HCT116 (cell line): ENCODE measurements at regions of chr2 and their contacts with region 1.

Region 1: GRCh38 chr2:159712143-159712928 is at the start of gene MARCHF7:
- DNase-seq: peak; percentile 89
- ATAC-seq: peak; percentile 94
- H3K4me3 ChIP-seq: peak within 1 kb of the TSS; percentile 96 to 98
- H3K27ac ChIP-seq: peak within 1 kb of the TSS; percentile 93
- H3K4me1 ChIP-seq: peaks cover 8 to 25% of the 10 kb centered on the region in 2 experiments; a peak in 3 of 4 replicates
- H3K27me3 ChIP-seq: no peaks in the 10 kb centered on the region
- CTCF ChIP-seq: peak; percentile 48 to 63 (median 57); a peak in 5 of 6 replicates
- POLR2A ChIP-seq: peak; percentile 48
- RAD21 ChIP-seq: peak; percentile 90
- total RNA-seq, gene MARCHF7: 65.9 TPM

Region 2: DNA sequence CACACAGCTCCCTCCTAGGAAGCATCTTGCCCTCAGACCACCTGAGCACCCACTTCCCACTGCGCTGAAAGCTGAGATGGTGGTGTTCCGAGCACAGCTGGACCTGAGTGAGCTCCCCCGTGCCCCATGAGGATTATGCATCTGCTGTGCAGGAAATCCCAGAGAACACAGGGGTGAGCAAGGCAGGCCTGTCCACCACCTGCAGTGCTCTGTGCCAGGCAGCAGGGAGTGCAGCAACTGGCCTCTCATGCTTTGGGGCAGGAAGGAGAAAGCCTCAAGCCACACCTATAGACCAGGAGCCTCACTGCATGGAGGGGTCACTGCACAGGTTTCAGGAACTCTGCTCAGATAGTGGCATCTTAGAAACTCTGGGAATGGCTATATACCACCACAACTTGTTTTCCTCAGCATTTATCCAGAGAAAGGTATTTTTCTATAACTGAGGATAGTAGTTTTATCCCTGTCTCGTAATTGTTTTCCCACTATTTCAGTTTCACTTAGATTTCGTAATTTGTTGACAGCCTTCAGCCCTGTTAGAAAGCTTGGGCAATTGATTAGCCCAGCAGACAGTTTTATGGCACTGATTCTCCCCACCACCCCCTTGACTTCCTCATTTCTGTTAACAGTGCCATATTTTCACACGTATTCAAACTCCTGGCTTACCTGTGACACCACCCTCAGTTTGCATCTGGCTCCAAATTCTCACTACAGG is 1061.5 kb before region 1 on chr2:
- CTCF ChIA-PET with region 1: no interaction called
- POLR2A ChIA-PET with region 1: no interaction called
- RAD21 ChIA-PET with region 1: no interaction called
- intact Hi-C with region 1: no loop called
- DNase-seq: no peak
- ATAC-seq: peak; percentile 62
- H3K4me3 ChIP-seq: no peak overlapping the region
- H3K27ac ChIP-seq: no peak overlapping the region
- H3K4me1 ChIP-seq: no peaks in the 10 kb centered on the region
- H3K27me3 ChIP-seq: no peaks in the 10 kb centered on the region
- CTCF ChIP-seq: no peak
- POLR2A ChIP-seq: no peak
- RAD21 ChIP-seq: no peak

Region 3: DNA sequence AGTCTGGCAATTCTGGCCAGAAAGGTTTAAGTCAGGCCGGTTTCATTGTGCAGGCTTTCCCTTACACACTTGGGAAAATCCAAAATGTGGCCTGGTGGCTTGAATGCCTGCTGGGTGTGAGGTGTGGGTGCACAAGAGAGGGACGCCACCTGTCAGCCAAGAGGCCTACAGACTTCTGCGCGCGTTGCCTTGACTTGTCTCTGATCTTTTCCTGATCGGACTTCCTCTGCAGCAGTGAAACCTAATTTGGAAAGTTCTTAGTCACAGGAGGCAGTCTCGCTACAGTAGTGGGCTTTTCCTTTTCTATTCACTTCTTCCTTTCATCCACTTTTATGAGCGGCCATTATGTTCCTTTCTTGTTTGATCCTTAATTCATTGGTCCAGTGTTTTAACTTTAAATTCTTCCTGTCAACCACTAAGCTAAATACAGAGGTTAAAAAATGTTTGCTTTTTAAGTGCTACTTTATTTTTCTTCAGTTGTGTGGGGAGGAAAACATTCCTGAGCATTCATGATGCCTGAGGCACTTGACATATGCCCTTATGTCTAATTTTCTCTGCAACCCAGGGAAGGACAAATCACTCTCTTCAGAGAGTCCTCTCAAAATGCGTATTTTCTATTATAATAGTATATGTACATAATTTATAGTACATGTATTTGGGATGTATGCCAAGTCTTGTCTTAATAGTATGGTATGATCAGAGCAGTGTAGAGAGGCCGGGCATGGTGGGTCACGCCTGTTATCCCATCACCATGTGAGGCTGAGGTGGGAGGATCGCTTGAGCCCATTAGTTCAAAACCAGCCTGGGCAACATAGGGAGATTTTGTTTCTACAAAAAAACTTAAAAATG is 554.8 kb before region 1 on chr2:
- CTCF ChIA-PET with region 1: no interaction called
- POLR2A ChIA-PET with region 1: no interaction called
- RAD21 ChIA-PET with region 1: no interaction called
- intact Hi-C with region 1: loop called (anchors 10 kb)
- DNase-seq: no peak
- ATAC-seq: no peak
- H3K4me3 ChIP-seq: no peak overlapping the region
- H3K27ac ChIP-seq: no peak overlapping the region
- H3K4me1 ChIP-seq: peaks cover 31 to 39% of the 10 kb centered on the region in 2 experiments
- H3K27me3 ChIP-seq: no peaks in the 10 kb centered on the region
- CTCF ChIP-seq: no peak
- POLR2A ChIP-seq: no peak
- RAD21 ChIP-seq: no peak

Region 4: GRCh38 chr2:159286709-159287441 is 425.5 kb before region 1 on chr2:
- CTCF ChIA-PET with region 1: no interaction called
- POLR2A ChIA-PET with region 1: interaction called, 4 read pairs
- RAD21 ChIA-PET with region 1: no interaction called
- intact Hi-C with region 1: loop called (anchors 10 kb)
- DNase-seq: peak; percentile 87
- ATAC-seq: peak; percentile 95
- H3K4me3 ChIP-seq: peak overlapping the region; percentile 73 to 78
- H3K27ac ChIP-seq: peak overlapping the region; percentile 86
- H3K4me1 ChIP-seq: peaks cover 7 to 29% of the 10 kb centered on the region in 2 experiments
- H3K27me3 ChIP-seq: no peaks in the 10 kb centered on the region
- CTCF ChIP-seq: no peak
- POLR2A ChIP-seq: peak; percentile 75
- RAD21 ChIP-seq: no peak

Region 5: GRCh38 chr2:159557451-159558034 is 154.8 kb before region 1 on chr2:
- CTCF ChIA-PET with region 1: interaction called, 4 read pairs
- POLR2A ChIA-PET with region 1: interaction called, 6 read pairs
- RAD21 ChIA-PET with region 1: interaction called in 1 of 2 experiments, 3 read pairs
- intact Hi-C with region 1: loop called (anchors 5 kb)
- DNase-seq: peak; percentile 16
- ATAC-seq: peak; percentile 68; the same call in 1 of the 2 replicates
- H3K4me3 ChIP-seq: no peak overlapping the region
- H3K27ac ChIP-seq: no peak overlapping the region
- H3K4me1 ChIP-seq: no peaks in the 10 kb centered on the region
- H3K27me3 ChIP-seq: no peaks in the 10 kb centered on the region
- CTCF ChIP-seq: peak; percentile 53 to 64 (median 59); a peak in 5 of 6 replicates
- POLR2A ChIP-seq: no peak
- RAD21 ChIP-seq: peak; percentile 80

Region 6: DNA sequence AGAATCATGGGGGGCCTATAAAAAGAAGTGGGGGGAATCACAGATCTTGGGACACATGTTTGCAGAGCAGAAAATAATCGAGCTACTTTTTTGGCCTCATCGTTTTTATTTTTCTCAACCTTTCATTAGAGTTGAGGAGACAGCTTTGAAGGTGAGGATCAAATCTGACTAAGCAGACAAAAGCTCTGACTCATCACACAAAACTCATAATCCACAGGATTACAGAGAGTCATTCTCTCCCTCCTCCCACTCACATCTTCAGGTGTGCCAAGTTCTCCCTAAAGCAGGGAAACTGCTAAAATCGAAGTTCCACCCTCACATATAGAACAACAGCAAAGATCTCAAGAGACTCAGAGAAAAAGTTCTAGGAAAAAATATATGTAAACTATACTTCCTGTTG is 111.6 kb before region 1 on chr2:
- CTCF ChIA-PET with region 1: no interaction called
- POLR2A ChIA-PET with region 1: no interaction called
- RAD21 ChIA-PET with region 1: no interaction called
- intact Hi-C with region 1: no loop called
- DNase-seq: peak; percentile 80
- ATAC-seq: peak; percentile 97
- H3K4me3 ChIP-seq: peak overlapping the region in 1 of 2 experiments; percentile 13; a peak in 2 of 4 replicates
- H3K27ac ChIP-seq: peak overlapping the region; percentile 2; the same call in 1 of the 2 replicates
- H3K4me1 ChIP-seq: peaks cover 19 to 22% of the 10 kb centered on the region in 2 experiments
- H3K27me3 ChIP-seq: no peaks in the 10 kb centered on the region
- CTCF ChIP-seq: no peak
- POLR2A ChIP-seq: no peak
- RAD21 ChIP-seq: peak; percentile 28; the same call in 1 of the 2 replicates